Naive thymus-derived CD4-positive, alpha-beta T cell (primary cell): ENCODE measurements at regions of chr6 and their contacts with region 1.

Region 1: DNA sequence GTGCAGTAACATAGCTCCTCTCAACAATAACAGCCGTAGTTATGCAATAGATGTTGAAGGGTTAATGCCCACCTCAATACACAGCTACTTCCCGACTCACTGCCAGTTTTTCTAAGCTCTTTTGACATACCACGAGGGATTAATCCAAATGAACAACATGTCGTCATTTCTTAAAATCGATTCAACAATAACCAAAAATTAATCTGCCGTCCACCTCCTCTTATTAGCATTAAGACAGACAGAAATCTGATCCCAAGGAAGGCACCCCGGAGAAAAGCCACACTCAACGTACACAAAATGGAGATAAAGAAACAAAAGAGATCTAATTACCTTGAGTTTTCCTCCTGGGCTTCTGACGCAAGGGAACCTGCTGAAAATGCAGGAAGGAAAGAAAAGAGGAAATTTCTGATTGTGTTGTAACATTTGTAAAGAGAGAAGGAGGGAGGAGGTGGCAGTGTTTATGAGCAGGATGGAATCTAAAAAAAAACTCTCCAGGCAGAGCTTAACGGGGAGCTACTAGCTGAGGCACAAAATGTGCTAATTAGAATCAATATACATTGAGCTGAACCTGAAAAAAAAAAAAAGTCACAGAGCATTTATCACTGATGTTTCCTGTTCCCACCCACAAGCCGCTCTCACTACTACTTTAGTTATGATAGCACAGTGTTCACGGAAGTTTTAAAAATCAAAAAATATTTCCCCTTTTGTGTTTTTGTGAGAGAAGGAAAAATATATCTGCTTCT is 109.3 kb downstream of the IPCEF1 start:
- DNase-seq: peak in 6 of 9 donors; percentile 45 to 67 (median 56)
- ATAC-seq: peak; percentile 64
- H3K4me3 ChIP-seq: peak overlapping the region; percentile 62
- H3K4me3 Mint-ChIP-seq: peak overlapping the region; percentile 84 to 100 (median 96)
- H3K27ac ChIP-seq: peak overlapping the region; percentile 81
- H3K27ac Mint-ChIP-seq: peak overlapping the region; percentile 90 to 97 (median 96)
- H3K4me1 ChIP-seq: peaks cover 52 to 59% of the 10 kb centered on the region in 2 donors
- H3K4me1 Mint-ChIP-seq: peaks cover 59 to 81% (median 77%) of the 10 kb centered on the region in 7 donors
- H3K27me3 ChIP-seq: no peaks in the 10 kb centered on the region
- H3K27me3 Mint-ChIP-seq: peaks cover 0 to 14% (median 0%) of the 10 kb centered on the region in 5 donors

Region 2: GRCh38 chr6:152821525-152821924 is 1425.8 kb before region 1 on chr6:
- CTCF ChIA-PET with region 1: no interaction called
- POLR2A ChIA-PET with region 1: no interaction called
- intact Hi-C with region 1: no loop called
- DNase-seq: no peak
- ATAC-seq: no peak
- H3K4me3 ChIP-seq: no peak overlapping the region
- H3K4me3 Mint-ChIP-seq: no peak overlapping the region
- H3K27ac ChIP-seq: no peak overlapping the region
- H3K27ac Mint-ChIP-seq: no peak overlapping the region
- H3K4me1 ChIP-seq: no peaks in the 10 kb centered on the region
- H3K4me1 Mint-ChIP-seq: no peaks in the 10 kb centered on the region
- H3K27me3 ChIP-seq: no peaks in the 10 kb centered on the region
- H3K27me3 Mint-ChIP-seq: peaks cover 0 to 11% (median 5%) of the 10 kb centered on the region in 5 donors

Region 3: DNA sequence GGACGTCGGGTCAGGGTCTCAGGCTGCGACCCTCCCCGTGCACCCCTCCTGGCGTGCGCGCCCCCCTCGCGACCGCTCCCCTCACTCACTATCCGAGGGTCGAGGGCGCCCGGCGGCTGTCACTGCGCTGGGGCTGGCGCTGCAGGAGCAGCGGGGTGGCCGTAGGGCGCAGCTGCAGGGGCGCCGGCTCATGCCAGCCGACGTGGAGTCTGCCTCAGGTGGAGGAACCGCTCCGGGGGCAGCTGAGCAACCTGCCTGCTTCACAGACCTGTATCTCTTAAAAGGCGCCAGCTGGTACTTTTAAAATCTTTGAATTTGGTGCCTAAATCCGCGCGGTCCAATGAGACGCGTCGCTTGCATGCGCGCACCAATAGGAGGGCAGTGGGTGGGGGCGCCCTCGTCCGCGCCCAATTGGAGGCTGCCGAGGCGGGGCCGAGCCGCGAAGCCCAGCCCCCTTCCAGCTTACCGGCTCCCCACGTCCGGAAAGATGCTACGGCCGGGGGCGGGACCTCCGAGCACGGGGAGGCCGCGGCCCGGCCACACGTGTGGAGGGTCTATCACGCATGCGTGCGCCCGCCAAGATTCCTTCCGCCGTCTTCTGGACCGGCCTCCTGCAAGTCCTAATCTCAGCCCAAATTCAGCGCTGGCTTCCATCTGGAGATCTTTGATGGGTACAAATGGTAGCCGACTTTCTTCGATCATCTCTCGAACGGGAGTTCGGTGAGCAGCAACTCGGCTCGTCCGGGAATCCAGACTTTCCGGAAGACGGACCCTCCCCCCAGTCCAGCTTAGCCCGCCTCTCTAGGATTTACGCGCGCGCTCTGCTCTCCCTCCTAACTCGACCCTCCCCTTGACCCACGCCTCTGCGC is 1264.3 kb before region 1 on chr6 and contains the start of gene FBXO5:
- CTCF ChIA-PET with region 1: no interaction called
- POLR2A ChIA-PET with region 1: no interaction called
- intact Hi-C with region 1: loop called in 1 of 2 experiments (anchors 2 kb)
- DNase-seq: peak; percentile 94 to 98 (median 96)
- ATAC-seq: peak; percentile 97
- H3K4me3 ChIP-seq: peak within 1 kb of the TSS; percentile 94
- H3K4me3 Mint-ChIP-seq: peak within 1 kb of the TSS; percentile 92 to 100 (median 96)
- H3K27ac ChIP-seq: peak within 1 kb of the TSS; percentile 89
- H3K27ac Mint-ChIP-seq: peak within 1 kb of the TSS; percentile 87 to 99 (median 95)
- H3K4me1 ChIP-seq: peaks cover 10 to 20% of the 10 kb centered on the region in 2 donors
- H3K4me1 Mint-ChIP-seq: peaks cover 33 to 58% (median 43%) of the 10 kb centered on the region in 7 donors
- H3K27me3 ChIP-seq: no peaks in the 10 kb centered on the region
- H3K27me3 Mint-ChIP-seq: no peaks in the 10 kb centered on the region
- total RNA-seq, gene FBXO5: 3.2 to 50.2 (median 9.2) TPM

Region 4: DNA sequence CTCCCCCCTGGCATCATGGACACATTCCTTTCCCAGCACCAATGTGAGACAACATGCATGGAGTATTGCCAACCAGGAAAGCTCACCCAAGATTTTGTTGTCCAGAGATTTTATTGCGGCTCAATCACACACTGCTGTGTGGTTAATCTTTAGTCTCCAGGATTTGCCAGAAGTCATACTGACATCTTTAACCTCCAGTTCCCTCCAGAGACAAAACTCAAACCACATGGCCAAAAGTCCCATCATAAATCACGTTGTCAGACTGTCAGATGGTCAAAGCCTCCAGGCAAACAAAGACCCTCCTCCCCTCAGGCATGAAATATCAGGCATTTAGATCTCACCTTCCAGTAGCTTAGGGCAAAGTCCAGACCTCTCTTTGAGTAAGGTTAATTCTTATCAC is 305.5 kb before region 1 on chr6:
- CTCF ChIA-PET with region 1: no interaction called
- POLR2A ChIA-PET with region 1: no interaction called
- intact Hi-C with region 1: no loop called
- DNase-seq: no peak
- ATAC-seq: no peak
- H3K4me3 ChIP-seq: no peak overlapping the region
- H3K4me3 Mint-ChIP-seq: no peak overlapping the region
- H3K27ac ChIP-seq: no peak overlapping the region
- H3K27ac Mint-ChIP-seq: no peak overlapping the region
- H3K4me1 ChIP-seq: no peaks in the 10 kb centered on the region
- H3K4me1 Mint-ChIP-seq: no peaks in the 10 kb centered on the region
- H3K27me3 ChIP-seq: no peaks in the 10 kb centered on the region
- H3K27me3 Mint-ChIP-seq: peaks cover 0 to 15% (median 8%) of the 10 kb centered on the region in 5 donors

Region 5: GRCh38 chr6:154164397-154165165 is 82.7 kb before region 1 on chr6:
- CTCF ChIA-PET with region 1: interaction called, 4 read pairs
- POLR2A ChIA-PET with region 1: interaction called, 12 read pairs
- intact Hi-C with region 1: no loop called
- DNase-seq: peak in 6 of 9 donors; percentile 33 to 54 (median 44)
- ATAC-seq: no peak
- H3K4me3 ChIP-seq: no peak overlapping the region
- H3K4me3 Mint-ChIP-seq: peak overlapping the region in 9 of 10 donors; percentile 48 to 77 (median 72)
- H3K27ac ChIP-seq: peak overlapping the region; percentile 35
- H3K27ac Mint-ChIP-seq: peak overlapping the region in 6 of 9 donors; percentile 33 to 93 (median 87)
- H3K4me1 ChIP-seq: peaks cover 0 to 38% of the 10 kb centered on the region in 2 donors
- H3K4me1 Mint-ChIP-seq: peaks cover 11 to 59% (median 33%) of the 10 kb centered on the region in 7 donors
- H3K27me3 ChIP-seq: no peaks in the 10 kb centered on the region
- H3K27me3 Mint-ChIP-seq: peaks cover 0 to 2% (median 0%) of the 10 kb centered on the region in 5 donors

Region 6: DNA sequence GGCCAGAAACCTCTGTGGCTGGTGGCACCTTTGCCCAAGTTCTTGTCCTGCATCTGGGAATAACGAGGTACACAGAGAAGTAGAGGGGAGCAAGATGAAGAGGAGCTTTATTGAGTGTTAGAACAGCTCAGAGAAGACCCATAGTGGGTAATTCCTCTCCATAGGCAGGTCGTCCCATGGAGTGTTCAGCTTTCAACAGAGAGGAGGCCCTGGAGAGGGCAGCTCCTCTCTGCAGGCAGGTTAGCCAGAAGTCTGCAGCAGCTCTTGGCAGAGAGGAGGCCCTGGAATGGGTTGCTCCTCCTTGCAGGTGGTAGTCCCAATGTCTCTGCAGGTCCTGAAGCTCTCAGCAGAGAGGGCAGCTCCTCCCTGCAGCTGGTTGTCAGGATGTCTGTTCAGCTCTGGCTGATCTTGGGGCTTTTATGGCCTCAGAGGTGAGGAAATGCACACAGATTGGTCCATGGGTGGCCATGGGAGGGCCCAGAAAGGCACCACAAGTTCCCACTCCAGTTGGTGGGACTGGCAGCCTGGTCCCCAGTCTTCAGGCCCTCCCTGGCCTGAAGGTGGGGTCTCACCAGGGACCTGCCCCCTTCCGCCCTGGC is 20.3 kb after region 1 on chr6:
- CTCF ChIA-PET with region 1: interaction called, 3 read pairs
- POLR2A ChIA-PET with region 1: interaction called, 49 read pairs
- intact Hi-C with region 1: loop called (anchors 1 to 2 kb)
- DNase-seq: peak in 4 of 9 donors; percentile 28 to 48 (median 42)
- ATAC-seq: peak; percentile 38
- H3K4me3 ChIP-seq: no peak overlapping the region
- H3K4me3 Mint-ChIP-seq: peak overlapping the region; percentile 6 to 85 (median 68)
- H3K27ac ChIP-seq: no peak overlapping the region
- H3K27ac Mint-ChIP-seq: peak overlapping the region in 8 of 9 donors; percentile 65 to 92 (median 84)
- H3K4me1 ChIP-seq: peaks cover 0 to 11% of the 10 kb centered on the region in 2 donors
- H3K4me1 Mint-ChIP-seq: peaks cover 14 to 45% (median 33%) of the 10 kb centered on the region in 7 donors
- H3K27me3 ChIP-seq: no peaks in the 10 kb centered on the region
- H3K27me3 Mint-ChIP-seq: peaks cover 0 to 9% (median 0%) of the 10 kb centered on the region in 5 donors

Region 7: GRCh38 chr6:155154158-155154830 is 907.0 kb after region 1 on chr6:
- CTCF ChIA-PET with region 1: no interaction called
- POLR2A ChIA-PET with region 1: no interaction called
- intact Hi-C with region 1: loop called in 1 of 2 experiments (anchors 10 kb)
- DNase-seq: peak in 1 of 9 donors; percentile 56
- ATAC-seq: no peak
- H3K4me3 ChIP-seq: no peak overlapping the region
- H3K4me3 Mint-ChIP-seq: peak overlapping the region in 1 of 10 donors; percentile 63
- H3K27ac ChIP-seq: no peak overlapping the region
- H3K27ac Mint-ChIP-seq: peak overlapping the region in 1 of 9 donors; percentile 95
- H3K4me1 ChIP-seq: peaks cover 5 to 12% of the 10 kb centered on the region in 2 donors
- H3K4me1 Mint-ChIP-seq: peaks cover 0 to 72% (median 14%) of the 10 kb centered on the region in 7 donors
- H3K27me3 ChIP-seq: no peaks in the 10 kb centered on the region
- H3K27me3 Mint-ChIP-seq: peaks cover 0 to 8% (median 4%) of the 10 kb centered on the region in 5 donors